BJ (cell line): ENCODE measurements at regions of chr5 and their contacts with region 1.

Region 1: GRCh38 chr5:141475625-141476131 is at the start of gene PCDHGC3:
- DNase-seq: peak; percentile 64
- H3K4me3 ChIP-seq: peak within 1 kb of the TSS; percentile 53
- H3K27me3 ChIP-seq: no peaks in the 10 kb centered on the region
- CTCF ChIP-seq: 0 out of 2 replicates have a peak, but pooled peaks have one; percentile 12
- polyA plus RNA-seq, gene PCDHGC3: 36.5 and 56.3 TPM in 2 replicates

Region 2: DNA sequence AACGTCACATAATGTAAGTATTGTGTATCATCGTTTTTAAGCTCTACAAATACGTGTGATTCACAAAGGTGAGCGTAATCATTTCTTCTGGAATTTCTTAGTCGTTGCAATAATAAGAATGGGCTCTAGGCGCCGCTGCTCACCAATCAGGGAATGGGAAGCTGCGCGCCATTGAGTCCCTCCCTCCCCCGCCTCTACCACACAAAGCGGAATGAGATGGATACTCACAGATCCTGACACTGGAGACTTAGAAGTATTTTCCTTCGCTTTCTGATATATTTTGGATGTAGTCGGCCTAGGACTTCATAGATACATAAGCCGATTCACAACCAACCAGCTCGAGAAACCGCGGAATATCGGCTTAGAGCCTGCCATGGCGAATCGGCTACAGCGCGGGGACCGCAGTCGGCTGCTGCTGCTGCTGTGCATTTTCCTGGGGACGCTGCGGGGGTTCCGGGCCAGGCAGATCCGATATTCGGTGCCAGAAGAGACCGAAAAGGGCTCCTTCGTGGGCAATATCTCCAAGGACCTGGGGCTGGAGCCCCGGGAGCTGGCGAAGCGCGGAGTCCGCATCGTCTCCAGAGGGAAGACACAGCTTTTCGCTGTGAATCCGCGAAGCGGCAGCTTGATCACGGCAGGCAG is 54.7 kb before region 1 on chr5 and contains the start of gene PCDHGA11:
- CTCF ChIA-PET with region 1: interaction called, 17 read pairs
- POLR2A ChIA-PET with region 1: no interaction called
- DNase-seq: no peak
- H3K4me3 ChIP-seq: peak within 1 kb of the TSS; percentile 47
- H3K27me3 ChIP-seq: no peaks in the 10 kb centered on the region
- CTCF ChIP-seq: peak; percentile 58
- polyA plus RNA-seq, gene PCDHGA11: 5.4 and 7.4 TPM in 2 replicates

Region 3: DNA sequence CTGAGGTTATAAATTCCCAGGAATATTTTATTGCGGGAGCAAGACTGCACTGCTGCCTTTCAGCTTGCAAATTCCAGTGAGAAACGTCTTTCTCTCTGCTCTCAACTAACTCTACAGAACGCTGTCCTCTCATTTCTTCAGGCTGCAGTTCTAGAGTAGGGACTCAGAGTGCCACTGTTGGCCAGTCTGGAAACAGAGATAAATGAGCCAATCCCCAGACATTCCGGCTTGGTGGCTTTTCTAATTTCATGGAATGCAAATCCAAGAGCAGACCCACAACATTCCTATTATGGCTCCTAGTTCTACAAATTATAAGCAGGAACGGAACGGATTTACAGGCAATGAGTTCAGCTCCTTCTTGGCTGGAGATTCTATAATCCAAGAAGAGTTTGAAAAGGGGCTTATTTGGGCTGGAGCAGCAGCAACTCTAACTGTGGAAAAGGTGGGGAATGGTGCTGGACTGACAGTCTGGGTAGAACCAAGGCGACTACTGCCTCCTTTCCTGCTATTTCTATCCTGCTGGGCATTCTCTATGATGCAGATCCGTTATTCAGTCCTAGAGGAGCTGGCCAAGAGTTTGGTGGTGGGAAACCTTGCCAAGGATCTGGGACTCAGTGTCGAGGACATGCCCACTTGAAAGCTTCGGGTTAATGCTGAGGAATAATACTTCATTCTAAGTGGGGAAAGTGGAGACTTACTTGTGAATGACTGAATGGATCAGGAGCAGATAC is 36.1 kb before region 1 on chr5:
- CTCF ChIA-PET with region 1: interaction called, 10 read pairs
- POLR2A ChIA-PET with region 1: no interaction called
- DNase-seq: no peak
- H3K4me3 ChIP-seq: no peak overlapping the region
- H3K27me3 ChIP-seq: no peaks in the 10 kb centered on the region
- CTCF ChIP-seq: no peak

Region 4: GRCh38 chr5:141729387-141730006 is 253.8 kb after region 1 on chr5:
- CTCF ChIA-PET with region 1: no interaction called
- POLR2A ChIA-PET with region 1: no interaction called
- DNase-seq: no peak
- H3K4me3 ChIP-seq: no peak overlapping the region
- H3K27me3 ChIP-seq: peaks cover 2% of the 10 kb centered on the region; the same call in 1 of the 2 replicates
- CTCF ChIP-seq: no peak